ENCODE measurements at regions of chr2 and their contacts with region 1.

Region 1: GRCh38 chr2:189848276-189848675 is 64.0 kb downstream of the PMS1 start:
- DNase-seq: no peak
- H3K4me3 ChIP-seq: no peak overlapping the region
- H3K27ac ChIP-seq: no peak overlapping the region
- H3K4me1 ChIP-seq: no peaks in the 10 kb centered on the region
- H3K27me3 ChIP-seq: no peaks in the 10 kb centered on the region
- CTCF ChIP-seq: no peak

Region 2: DNA sequence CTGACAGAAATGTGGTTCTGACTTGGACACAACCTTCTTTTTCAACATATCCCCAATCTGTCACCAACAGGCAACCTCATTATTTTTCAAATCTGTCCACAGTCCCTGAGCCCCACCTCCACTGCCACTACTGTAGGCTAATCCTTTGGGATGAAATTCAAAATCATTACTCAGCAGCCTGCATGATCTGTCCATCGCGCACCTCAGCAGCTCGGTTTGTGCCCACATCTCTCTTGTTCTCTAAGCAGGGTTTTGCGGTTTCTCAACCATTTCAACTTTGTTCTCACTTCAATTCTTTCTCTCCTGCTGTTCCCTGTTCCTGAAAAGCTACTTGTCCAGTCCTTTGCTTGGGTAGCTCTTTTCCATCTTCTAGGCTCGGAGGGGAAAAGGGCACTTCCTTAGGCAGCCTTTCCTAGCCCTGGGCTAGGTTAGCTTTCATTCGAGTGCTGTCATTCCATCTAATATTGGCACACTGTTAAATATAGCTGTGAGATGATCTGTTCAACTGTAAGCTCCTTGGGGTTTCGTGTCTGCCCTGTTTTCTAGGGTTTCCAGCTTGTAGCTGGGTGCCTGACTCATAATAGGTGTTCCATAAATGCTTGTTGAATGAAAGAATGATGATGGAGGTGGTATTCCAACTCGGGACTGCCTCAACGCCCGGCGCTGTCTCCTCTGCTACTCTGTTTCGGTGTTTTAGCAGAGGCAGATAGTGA is 174.5 kb before region 1 on chr2:
- CTCF ChIA-PET with region 1: no interaction called
- POLR2A ChIA-PET with region 1: no interaction called
- intact Hi-C with region 1: no loop called
- DNase-seq: no peak
- H3K4me3 ChIP-seq: peak overlapping the region; percentile 55
- H3K27ac ChIP-seq: no peak overlapping the region
- H3K4me1 ChIP-seq: peaks cover 7% of the 10 kb centered on the region
- H3K27me3 ChIP-seq: no peaks in the 10 kb centered on the region
- CTCF ChIP-seq: no peak

Region 3: DNA sequence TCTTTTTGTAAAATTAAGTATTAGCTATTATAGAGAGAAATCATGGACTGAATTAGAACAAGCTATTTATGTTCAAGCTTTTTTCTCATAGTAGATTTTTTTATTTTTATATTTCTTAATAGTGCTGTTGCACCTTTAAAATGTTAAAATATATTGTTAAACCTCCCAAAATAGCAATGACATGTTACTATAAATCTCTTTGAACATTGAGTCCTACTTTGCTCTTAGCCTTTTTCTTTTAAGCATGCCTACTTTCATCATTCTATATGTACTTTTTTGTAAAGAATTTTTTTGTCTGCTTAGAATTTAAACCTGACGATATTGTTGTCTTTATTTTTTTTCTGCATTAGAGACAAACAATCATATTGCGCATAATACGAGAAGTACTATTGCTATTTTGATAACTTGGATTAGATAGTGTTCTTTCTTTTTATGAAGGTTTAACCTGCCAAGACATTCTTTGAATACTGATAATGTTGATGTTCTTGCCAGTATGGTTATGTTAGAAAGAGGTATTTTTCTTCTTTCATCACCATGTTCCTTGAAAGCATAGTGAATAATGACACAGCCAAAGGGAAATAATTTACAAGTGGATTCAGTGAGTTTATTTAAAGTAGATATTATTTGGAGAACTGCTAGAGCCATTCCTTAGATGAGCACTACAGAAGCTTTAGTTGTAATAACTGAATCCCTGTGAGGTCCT is 23.4 kb before region 1 on chr2:
- CTCF ChIA-PET with region 1: no interaction called
- POLR2A ChIA-PET with region 1: interaction called, 24 read pairs
- intact Hi-C with region 1: no loop called
- DNase-seq: no peak
- H3K4me3 ChIP-seq: no peak overlapping the region
- H3K27ac ChIP-seq: no peak overlapping the region
- H3K4me1 ChIP-seq: no peaks in the 10 kb centered on the region
- H3K27me3 ChIP-seq: no peaks in the 10 kb centered on the region
- CTCF ChIP-seq: no peak

Region 4: DNA sequence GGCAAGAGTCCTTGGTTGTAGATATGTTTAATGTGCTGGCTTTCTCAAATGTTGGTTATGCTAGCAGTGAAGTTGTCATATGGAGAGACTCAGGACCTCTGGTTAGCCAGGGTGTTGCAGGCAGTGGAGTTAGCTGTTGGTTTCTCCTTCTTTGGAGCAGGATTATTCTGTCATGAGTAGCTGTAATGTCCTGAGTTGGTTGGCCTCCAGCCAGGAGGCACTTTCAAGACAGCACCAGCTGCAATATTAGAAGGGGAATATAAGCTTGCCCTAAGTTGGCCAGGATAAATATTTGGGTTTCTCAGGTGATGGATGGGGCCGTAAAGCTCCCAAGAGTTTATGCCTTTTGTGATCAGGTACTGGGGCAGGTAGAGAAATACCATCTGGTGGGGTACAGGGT is 148.7 kb after region 1 on chr2:
- CTCF ChIA-PET with region 1: interaction called, 13 read pairs
- POLR2A ChIA-PET with region 1: no interaction called
- intact Hi-C with region 1: no loop called
- DNase-seq: no peak
- H3K4me3 ChIP-seq: no peak overlapping the region
- H3K27ac ChIP-seq: no peak overlapping the region
- H3K4me1 ChIP-seq: no peaks in the 10 kb centered on the region
- H3K27me3 ChIP-seq: no peaks in the 10 kb centered on the region
- CTCF ChIP-seq: no peak

Measured in A673 (cell line).